Left ventricle myocardium inferior (tissue), 1 donor: ENCODE measurements at regions of chr12 and their contacts with region 1.

Region 1: DNA sequence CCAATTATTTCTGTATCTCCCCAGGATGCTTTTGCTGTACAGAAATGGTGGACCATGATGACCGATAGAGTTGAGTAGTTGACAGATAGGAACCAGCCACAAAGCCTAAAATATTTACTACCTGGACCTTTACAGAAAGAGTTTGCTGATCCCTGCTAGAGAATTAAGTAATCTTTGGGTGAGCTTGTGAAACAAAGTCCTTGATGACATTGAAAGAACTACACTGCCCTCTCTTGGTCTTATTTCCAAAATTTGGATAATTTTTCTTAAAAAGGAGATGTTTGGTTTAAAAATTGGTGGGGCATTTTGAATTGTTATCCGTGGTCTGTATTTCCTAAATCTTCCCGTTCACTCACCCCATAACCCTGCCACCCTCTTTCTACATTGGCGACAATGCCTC is 13.7 kb upstream of the TCTN1 start:
- DNase-seq: no peak
- H3K4me3 ChIP-seq: no peak overlapping the region
- H3K27ac ChIP-seq: no peak overlapping the region
- H3K4me1 ChIP-seq: peaks cover 3% of the 10 kb centered on the region
- H3K27me3 ChIP-seq: no peaks in the 10 kb centered on the region
- CTCF ChIP-seq: peak; percentile 50

Region 2: GRCh38 chr12:110513842-110514241 is 86.4 kb before region 1 on chr12:
- intact Hi-C with region 1: loop called (anchors 5 kb)
- DNase-seq: no peak
- H3K4me3 ChIP-seq: no peak overlapping the region
- H3K27ac ChIP-seq: no peak overlapping the region
- H3K4me1 ChIP-seq: peaks cover 5% of the 10 kb centered on the region
- H3K27me3 ChIP-seq: no peaks in the 10 kb centered on the region
- CTCF ChIP-seq: no peak